ENCODE measurements at regions of chr5 and their contacts with region 1.

Region 1: GRCh38 chr5:149268928-149269557 is 2.6 kb upstream of the AFAP1L1 start:
- DNase-seq: no peak
- ATAC-seq: peak in 1 of 4 donors; percentile 19
- H3K4me3 ChIP-seq: no peak overlapping the region
- H3K27ac ChIP-seq: no peak overlapping the region
- H3K4me1 ChIP-seq: peaks cover 10% of the 10 kb centered on the region
- H3K27me3 ChIP-seq: no peaks in the 10 kb centered on the region
- CTCF ChIP-seq: peak; percentile 77

Region 2: DNA sequence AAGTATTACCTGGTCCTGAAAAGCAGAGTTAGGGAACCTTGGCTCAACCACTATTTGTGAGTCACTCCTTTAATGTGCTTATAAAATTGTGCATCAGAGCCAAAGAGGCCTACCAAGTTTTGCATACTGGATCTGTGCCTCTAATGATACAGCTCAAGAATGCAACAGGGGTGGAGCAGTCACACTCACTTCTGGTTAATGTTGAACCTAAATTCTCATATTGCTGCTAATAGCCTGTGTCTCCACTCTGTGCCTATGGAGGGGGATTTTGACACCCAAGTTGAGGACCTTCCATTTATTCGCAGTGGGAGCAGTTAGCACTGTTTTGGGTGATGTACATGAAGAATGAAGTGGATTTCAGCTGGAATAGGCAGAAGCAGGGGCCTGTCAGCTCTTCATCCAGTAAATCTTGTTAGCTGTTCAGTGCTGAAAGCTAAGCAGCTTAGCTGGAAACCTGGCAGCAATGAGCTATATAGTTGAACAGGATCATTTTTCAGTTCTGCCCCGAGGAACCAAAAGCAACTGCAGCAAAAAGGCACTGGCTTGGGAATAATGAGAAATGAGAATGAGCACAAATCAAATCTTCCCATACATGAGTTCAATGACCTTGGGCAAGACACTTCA is 215.9 kb before region 1 on chr5:
- intact Hi-C with region 1: no loop called
- DNase-seq: no peak
- ATAC-seq: peak in 1 of 4 donors; percentile 13
- H3K4me3 ChIP-seq: no peak overlapping the region
- H3K27ac ChIP-seq: no peak overlapping the region
- H3K4me1 ChIP-seq: no peaks in the 10 kb centered on the region
- H3K27me3 ChIP-seq: no peaks in the 10 kb centered on the region
- CTCF ChIP-seq: no peak

Region 3: DNA sequence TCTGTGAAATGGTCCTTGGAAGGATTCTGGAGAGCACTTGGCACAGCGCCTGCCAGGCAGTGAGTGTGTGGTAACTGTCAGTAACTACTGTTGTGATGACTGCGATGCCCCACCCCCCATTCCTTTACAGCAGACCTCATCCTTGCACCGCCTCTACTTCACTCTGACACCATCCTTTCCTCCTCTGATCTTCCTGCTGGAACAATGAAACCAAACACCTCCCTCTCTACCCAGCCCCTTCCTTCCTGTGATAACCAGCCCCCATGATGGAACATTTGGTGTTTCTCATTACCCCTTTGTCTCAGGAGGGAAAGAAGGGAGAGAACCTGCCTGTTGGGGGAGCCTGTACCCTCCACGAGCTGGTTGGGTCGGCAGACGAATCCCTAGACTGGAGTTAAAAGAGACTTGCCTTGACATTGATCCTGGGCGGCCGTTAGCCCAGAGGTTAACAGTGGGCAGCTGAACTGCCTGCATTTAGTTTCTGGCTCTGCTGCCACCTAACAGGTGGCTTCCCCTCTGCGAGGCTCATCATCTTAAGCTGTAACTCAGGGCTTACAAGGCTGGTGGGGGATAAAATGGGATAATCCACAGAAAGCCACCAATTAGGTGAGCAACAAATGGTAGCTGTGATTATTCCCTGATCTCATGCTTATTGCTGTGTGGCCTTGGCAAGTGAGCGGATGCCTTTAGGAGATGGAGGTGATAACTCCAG is 42.1 kb after region 1 on chr5:
- intact Hi-C with region 1: loop called in 1 of 2 experiments (anchors 5 kb)
- DNase-seq: peak; percentile 59 to 78
- ATAC-seq: peak in 2 of 4 donors; percentile 30 to 34
- H3K4me3 ChIP-seq: no peak overlapping the region
- H3K27ac ChIP-seq: peak overlapping the region; percentile 77
- H3K4me1 ChIP-seq: peaks cover 42% of the 10 kb centered on the region
- H3K27me3 ChIP-seq: no peaks in the 10 kb centered on the region
- CTCF ChIP-seq: no peak

Region 4: DNA sequence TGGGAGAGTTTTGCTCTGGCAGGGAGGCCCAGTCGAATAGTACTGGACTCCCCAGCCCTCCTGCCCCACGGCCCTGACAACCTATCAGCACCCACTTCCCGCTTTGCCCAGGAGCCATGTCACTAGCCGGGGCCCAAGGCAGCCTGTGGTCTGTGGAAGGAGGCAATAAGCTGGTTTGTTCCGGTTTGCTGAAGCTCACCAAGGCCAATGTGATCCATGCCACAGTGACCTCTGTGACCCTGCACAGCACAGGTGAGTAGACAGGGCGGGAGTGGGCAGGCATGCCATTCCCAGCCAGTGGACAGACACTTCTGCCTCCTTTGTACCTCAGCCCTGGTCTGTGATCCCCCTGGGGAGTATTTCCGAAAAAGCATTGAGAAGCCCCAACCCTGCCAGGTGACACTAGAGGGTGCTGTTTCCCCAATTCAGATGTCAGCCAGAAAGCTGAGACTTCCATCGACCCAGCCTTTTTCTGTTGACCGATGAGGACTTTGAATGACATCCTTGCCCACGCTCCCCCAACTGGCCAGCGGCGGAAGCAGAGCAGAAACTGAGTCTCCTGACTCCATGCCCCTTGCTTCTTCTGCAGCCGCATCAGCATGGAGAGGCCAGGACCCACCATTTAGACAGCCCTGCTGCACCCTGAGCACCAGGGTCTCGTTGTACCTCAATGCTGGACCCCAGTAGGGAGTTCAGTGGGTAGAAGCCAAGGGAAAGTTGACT is 98.4 kb after region 1 on chr5:
- intact Hi-C with region 1: loop called (anchors 1 to 5 kb)
- DNase-seq: no peak
- ATAC-seq: peak; percentile 24 to 67 (median 50)
- H3K4me3 ChIP-seq: no peak overlapping the region
- H3K27ac ChIP-seq: no peak overlapping the region
- H3K4me1 ChIP-seq: peaks cover 9% of the 10 kb centered on the region
- H3K27me3 ChIP-seq: no peaks in the 10 kb centered on the region
- CTCF ChIP-seq: peak; percentile 61

Region 5: GRCh38 chr5:149434162-149435014 is 165.3 kb after region 1 on chr5:
- intact Hi-C with region 1: loop called in 1 of 2 experiments (anchors 10 kb)
- DNase-seq: no peak
- ATAC-seq: peak; percentile 59 to 77 (median 66)
- H3K4me3 ChIP-seq: no peak overlapping the region
- H3K27ac ChIP-seq: no peak overlapping the region
- H3K4me1 ChIP-seq: peaks cover 8% of the 10 kb centered on the region
- H3K27me3 ChIP-seq: no peaks in the 10 kb centered on the region
- CTCF ChIP-seq: peak; percentile 86

Measured in psoas muscle (tissue), 8 donors.